ENCODE measurements at regions of chr12 and their contacts with region 1.

Region 1: GRCh38 chr12:84874125-84874824 is 38.3 kb downstream of the SLC6A15 start:
- DNase-seq: no peak
- H3K4me3 ChIP-seq: no peak overlapping the region
- H3K27ac ChIP-seq: no peak overlapping the region
- H3K4me1 ChIP-seq: no peaks in the 10 kb centered on the region
- H3K27me3 ChIP-seq: no peaks in the 10 kb centered on the region
- CTCF ChIP-seq: peak; percentile 69

Region 2: GRCh38 chr12:85029456-85029855 is 155.2 kb after region 1 on chr12:
- intact Hi-C with region 1: loop called (anchors 5 kb)
- DNase-seq: no peak
- H3K4me3 ChIP-seq: no peak overlapping the region
- H3K27ac ChIP-seq: no peak overlapping the region
- H3K4me1 ChIP-seq: no peaks in the 10 kb centered on the region
- H3K27me3 ChIP-seq: no peaks in the 10 kb centered on the region
- CTCF ChIP-seq: peak; percentile 36